Activated CD4-positive, alpha-beta T cell treated with anti-CD3 and anti-CD28 coated beads for 36 hours (primary cell): ENCODE measurements at regions of chr1 and their contacts with region 1.

Region 1: DNA sequence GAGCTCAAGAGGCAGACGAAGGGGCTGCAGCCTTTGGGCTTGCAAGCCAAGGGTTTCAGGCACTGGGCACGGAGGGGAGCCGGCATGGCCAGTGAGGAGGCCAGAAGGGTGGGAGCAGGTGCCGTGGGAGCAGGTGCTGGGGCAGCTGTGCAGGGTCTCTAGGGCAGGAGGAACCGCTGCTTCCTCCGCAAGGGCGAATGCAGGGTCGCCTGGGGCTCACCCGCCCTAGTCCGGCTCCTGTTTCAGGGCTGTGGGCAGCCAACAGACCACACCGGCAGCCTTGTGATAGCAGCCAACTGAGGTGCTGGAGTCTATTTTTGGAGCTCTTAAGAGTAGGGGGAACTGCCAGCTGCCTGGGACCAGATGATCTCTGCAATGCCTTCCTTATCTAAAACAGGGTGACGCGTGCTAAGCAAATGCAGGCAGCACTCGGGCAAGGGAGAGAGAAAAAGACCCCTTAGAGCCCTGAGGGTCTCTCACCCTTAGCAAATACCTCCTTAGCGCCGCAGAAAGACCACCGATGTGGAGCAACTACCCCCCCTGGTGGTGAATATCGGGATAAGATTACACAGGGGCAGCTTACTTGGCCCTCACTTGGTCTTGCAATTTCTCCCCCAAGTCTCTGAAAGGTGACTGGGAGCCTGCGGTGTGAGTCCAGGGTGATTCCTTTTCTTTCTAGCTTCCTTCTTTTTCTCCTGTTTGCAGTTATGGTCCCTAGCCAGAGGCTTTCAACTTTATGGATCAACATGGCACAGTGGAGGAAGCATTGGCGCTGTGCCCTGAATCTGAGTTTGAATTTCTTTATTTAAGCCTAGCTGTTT is 20.7 kb upstream of the MAPKAPK2 start:
- DNase-seq: peak; percentile 83
- ATAC-seq: peak; percentile 70
- H3K4me3 Mint-ChIP-seq: no peak overlapping the region
- H3K27ac Mint-ChIP-seq: no peak overlapping the region
- H3K4me1 Mint-ChIP-seq: peaks cover 28% of the 10 kb centered on the region
- H3K27me3 Mint-ChIP-seq: peaks cover 23% of the 10 kb centered on the region

Region 2: DNA sequence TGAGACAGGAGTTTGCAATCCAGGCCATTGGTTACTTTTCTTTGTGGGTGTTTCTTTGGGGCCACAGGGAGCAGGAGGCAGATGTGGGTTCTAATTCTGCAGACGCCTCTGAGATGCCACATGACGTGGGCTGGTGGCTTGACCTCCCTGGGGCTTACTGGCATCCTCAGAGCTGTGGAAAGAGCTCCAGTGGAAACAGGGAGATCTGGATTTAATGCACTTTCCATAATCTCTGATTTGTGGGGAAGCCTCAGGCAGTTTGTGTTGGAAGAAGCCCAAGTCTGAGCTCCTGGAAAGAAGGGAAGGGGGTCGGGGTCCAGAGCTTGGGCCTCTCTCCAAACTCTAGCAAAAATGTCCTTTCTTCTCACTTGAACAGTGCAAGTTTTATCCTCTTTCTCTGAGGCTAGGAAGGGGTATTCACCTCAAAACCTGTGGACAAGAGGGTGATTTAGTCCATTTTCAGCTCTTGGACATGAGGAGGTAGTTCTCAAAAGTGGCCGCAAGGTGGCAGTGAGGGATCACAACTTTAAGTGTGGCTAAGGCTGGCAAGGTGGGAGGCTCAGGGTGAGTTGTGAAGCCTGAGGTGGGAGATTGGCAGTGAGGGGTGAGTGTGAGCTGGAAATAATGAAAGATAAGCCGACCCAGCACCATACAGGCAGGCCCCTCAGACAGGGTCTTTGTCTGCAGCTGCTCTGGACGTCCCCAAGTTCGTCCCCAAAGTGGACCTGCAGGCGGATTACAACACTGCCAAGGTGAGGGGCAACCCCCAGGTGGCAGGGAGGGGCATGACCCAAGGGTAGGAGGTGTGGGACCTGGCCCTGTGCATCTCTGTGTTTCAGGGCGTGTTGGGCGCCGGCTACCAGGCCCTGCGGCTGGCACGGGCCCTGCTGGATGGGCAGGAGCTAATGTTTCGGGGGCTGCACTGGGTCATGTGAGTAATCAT is 184.6 kb before region 1 on chr1:
- CTCF ChIA-PET with region 1: interaction called, 55 read pairs
- POLR2A ChIA-PET with region 1: no interaction called
- intact Hi-C with region 1: loop called (anchors 1 to 2 kb)
- DNase-seq: peak; percentile 85
- ATAC-seq: peak; percentile 56
- H3K4me3 Mint-ChIP-seq: no peak overlapping the region
- H3K27ac Mint-ChIP-seq: peak overlapping the region; percentile 66
- H3K4me1 Mint-ChIP-seq: peaks cover 28% of the 10 kb centered on the region
- H3K27me3 Mint-ChIP-seq: no peaks in the 10 kb centered on the region

Region 3: GRCh38 chr1:206583707-206584648 is 80.1 kb before region 1 on chr1:
- CTCF ChIA-PET with region 1: interaction called, 15 read pairs
- POLR2A ChIA-PET with region 1: interaction called, 3 read pairs
- intact Hi-C with region 1: no loop called
- DNase-seq: peak; percentile 93
- ATAC-seq: peak; percentile 31
- H3K4me3 Mint-ChIP-seq: peak overlapping the region; percentile 65
- H3K27ac Mint-ChIP-seq: peak overlapping the region; percentile 99
- H3K4me1 Mint-ChIP-seq: peaks cover 87% of the 10 kb centered on the region
- H3K27me3 Mint-ChIP-seq: no peaks in the 10 kb centered on the region

Region 4: GRCh38 chr1:206635080-206635977 is 28.7 kb before region 1 on chr1 and contains the start of gene DYRK3:
- CTCF ChIA-PET with region 1: interaction called, 564 read pairs
- POLR2A ChIA-PET with region 1: interaction called, 8 read pairs
- intact Hi-C with region 1: loop called (anchors 1 kb)
- DNase-seq: peak; percentile 97
- ATAC-seq: peak; percentile 93
- H3K4me3 Mint-ChIP-seq: peak within 1 kb of the TSS; percentile 76
- H3K27ac Mint-ChIP-seq: peak within 1 kb of the TSS; percentile 87
- H3K4me1 Mint-ChIP-seq: peaks cover 27% of the 10 kb centered on the region
- H3K27me3 Mint-ChIP-seq: peaks cover 7% of the 10 kb centered on the region
- total RNA-seq, gene DYRK3: 8.3 to 8.7 TPM

Region 5: DNA sequence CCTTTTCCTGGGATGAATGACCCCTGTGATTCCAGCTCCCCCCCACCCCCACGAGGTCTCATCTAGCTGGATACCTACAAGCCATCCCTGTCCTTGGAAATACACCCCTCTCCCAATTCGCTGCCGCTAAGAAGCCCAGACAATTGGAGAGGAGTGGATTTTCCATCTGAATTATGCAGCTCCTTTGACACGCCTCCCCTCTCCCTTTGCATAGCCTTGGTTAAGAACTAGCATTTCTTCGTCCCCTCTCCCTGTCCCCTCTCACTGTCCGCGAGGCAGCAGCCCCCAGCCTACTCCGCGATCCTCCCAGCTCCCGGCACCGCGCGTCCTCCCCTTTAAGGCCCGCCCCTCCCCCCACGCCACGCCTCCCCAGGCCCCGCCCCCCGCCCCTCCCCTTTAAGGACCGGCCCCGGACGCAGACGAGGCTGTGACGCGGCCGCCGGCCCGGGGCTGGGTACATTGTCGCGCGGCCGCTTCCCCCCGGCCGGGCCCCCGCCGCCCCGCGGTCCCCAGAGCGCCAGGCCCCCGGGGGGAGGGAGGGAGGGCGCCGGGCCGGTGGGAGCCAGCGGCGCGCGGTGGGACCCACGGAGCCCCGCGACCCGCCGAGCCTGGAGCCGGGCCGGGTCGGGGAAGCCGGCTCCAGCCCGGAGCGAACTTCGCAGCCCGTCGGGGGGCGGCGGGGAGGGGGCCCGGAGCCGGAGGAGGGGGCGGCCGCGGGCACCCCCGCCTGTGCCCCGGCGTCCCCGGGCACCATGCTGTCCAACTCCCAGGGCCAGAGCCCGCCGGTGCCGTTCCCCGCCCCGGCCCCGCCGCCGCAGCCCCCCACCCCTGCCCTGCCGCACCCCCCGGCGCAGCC is 20.7 kb after region 1 on chr1 and contains the start of gene MAPKAPK2:
- CTCF ChIA-PET with region 1: interaction called, 29 read pairs
- POLR2A ChIA-PET with region 1: interaction called, 3 read pairs
- intact Hi-C with region 1: loop called in 1 of 2 experiments (anchors 1 kb)
- DNase-seq: peak; percentile 88
- ATAC-seq: peak; percentile 70
- H3K4me3 Mint-ChIP-seq: peak within 1 kb of the TSS; percentile 98
- H3K27ac Mint-ChIP-seq: peak within 1 kb of the TSS; percentile 94
- H3K4me1 Mint-ChIP-seq: peaks cover 66% of the 10 kb centered on the region
- H3K27me3 Mint-ChIP-seq: peaks cover 2% of the 10 kb centered on the region
- total RNA-seq, gene MAPKAPK2: 62.8 to 64.7 TPM

Region 6: DNA sequence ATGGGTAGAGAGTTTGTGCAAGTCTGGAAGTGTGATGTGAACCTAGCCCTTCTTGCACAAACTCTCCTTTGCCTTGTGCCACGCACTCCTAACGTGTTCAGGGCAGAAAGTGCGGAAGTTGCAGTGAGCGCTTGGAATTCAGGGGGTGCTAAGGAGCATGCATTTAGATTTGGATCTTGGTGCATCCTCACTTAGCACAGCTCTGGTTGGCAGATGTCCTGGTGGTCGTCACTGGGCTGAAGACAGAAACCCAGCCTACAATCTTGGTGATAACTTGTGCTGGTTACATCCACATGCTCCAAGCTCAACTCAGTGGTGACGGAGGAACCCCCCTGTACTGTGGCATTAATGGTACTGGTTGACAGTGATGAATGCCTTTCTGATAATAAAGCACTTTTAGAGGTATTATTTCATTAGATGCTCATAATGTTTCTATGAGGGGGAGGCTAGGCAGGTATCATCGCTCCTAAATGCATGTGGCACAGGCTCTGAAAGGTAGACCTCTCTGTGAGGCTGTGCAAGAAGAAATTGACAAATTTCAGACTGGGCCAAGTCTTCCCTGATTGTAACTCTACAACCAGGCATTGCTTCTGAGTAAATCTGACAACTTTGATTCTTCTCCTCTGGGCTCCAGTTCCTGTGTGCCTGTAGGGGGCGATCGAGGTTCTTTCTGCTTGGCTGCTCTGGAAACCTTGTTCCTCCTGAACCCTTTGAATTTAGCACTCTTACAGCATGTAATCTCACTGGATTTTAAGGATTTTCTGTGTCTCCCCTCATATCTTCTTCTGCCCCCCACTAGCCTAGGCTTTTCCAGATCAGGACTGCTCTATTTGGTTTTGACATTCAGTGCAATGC is 61.3 kb after region 1 on chr1:
- CTCF ChIA-PET with region 1: interaction called, 11 read pairs
- POLR2A ChIA-PET with region 1: no interaction called
- intact Hi-C with region 1: no loop called
- DNase-seq: peak; percentile 85
- ATAC-seq: peak; percentile 72
- H3K4me3 Mint-ChIP-seq: no peak overlapping the region
- H3K27ac Mint-ChIP-seq: peak overlapping the region; percentile 29
- H3K4me1 Mint-ChIP-seq: peaks cover 49% of the 10 kb centered on the region
- H3K27me3 Mint-ChIP-seq: no peaks in the 10 kb centered on the region

Region 7: GRCh38 chr1:207240325-207241095 is 576.5 kb after region 1 on chr1:
- CTCF ChIA-PET with region 1: no interaction called
- POLR2A ChIA-PET with region 1: no interaction called
- intact Hi-C with region 1: no loop called
- DNase-seq: no peak
- ATAC-seq: no peak
- H3K4me3 Mint-ChIP-seq: no peak overlapping the region
- H3K27ac Mint-ChIP-seq: no peak overlapping the region
- H3K4me1 Mint-ChIP-seq: peaks cover 5% of the 10 kb centered on the region
- H3K27me3 Mint-ChIP-seq: no peaks in the 10 kb centered on the region

Region 8: GRCh38 chr1:207499573-207499972 is 835.5 kb after region 1 on chr1:
- CTCF ChIA-PET with region 1: no interaction called
- POLR2A ChIA-PET with region 1: no interaction called
- intact Hi-C with region 1: no loop called
- DNase-seq: peak; percentile 85
- ATAC-seq: peak; percentile 70
- H3K4me3 Mint-ChIP-seq: no peak overlapping the region
- H3K27ac Mint-ChIP-seq: peak overlapping the region; percentile 30
- H3K4me1 Mint-ChIP-seq: peaks cover 24% of the 10 kb centered on the region
- H3K27me3 Mint-ChIP-seq: peaks cover 32% of the 10 kb centered on the region